IMR-90 (cell line): ENCODE measurements at regions of chr3 and their contacts with region 1.

Region 1: GRCh38 chr3:146577662-146578061 is 27.5 kb downstream of the PLSCR5 start:
- DNase-seq: peak; percentile 73
- ATAC-seq: peak; percentile 66; the same call in 1 of the 2 replicates
- H3K4me3 ChIP-seq: no peak overlapping the region
- H3K27ac ChIP-seq: no peak overlapping the region
- H3K4me1 ChIP-seq: peaks cover 2% of the 10 kb centered on the region; the same call in 1 of the 2 replicates
- H3K27me3 ChIP-seq: no peaks in the 10 kb centered on the region
- CTCF ChIP-seq: peak; percentile 70
- POLR2A ChIP-seq: no peak
- RAD21 ChIP-seq: peak; percentile 81

Region 2: DNA sequence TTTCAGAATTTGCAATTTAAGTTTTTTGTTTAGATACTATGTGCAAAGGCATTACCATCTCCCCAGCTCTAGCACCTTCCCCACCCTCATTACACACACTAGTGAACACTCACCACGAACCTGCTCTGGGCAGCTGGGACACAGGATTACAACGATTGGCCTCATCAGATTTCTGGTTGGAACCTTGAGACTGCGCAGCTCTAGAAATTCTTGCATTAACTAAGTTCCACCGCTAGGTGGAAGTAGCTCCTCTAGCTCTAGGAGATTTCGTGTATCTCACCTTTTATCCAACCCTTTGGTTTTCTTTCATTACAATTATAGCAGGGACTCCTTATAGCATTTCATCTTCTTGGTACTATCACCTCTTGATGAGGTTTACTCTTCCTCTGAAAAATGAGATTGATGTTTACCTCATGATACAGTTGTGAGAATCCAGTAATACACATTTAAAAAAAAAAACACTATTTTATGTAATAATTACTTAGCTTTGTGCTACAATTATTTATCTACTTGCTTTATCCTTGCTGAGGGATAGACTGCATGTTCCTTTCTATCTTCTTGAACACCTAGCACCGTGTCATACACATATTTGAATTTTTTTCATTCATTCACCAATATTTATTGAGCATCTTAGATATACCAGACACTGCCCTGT is 388.0 kb before region 1 on chr3:
- CTCF ChIA-PET with region 1: interaction called, 7 read pairs
- POLR2A ChIA-PET with region 1: no interaction called
- dilution Hi-C with region 1: no loop called
- in situ Hi-C with region 1: no loop called
- intact Hi-C with region 1: loop called (anchors 2 kb)
- DNase-seq: peak; percentile 64
- ATAC-seq: peak; percentile 95
- H3K4me3 ChIP-seq: no peak overlapping the region
- H3K27ac ChIP-seq: no peak overlapping the region
- H3K4me1 ChIP-seq: no peaks in the 10 kb centered on the region
- H3K27me3 ChIP-seq: no peaks in the 10 kb centered on the region
- CTCF ChIP-seq: peak; percentile 79
- POLR2A ChIP-seq: no peak
- RAD21 ChIP-seq: peak; percentile 83

Region 3: DNA sequence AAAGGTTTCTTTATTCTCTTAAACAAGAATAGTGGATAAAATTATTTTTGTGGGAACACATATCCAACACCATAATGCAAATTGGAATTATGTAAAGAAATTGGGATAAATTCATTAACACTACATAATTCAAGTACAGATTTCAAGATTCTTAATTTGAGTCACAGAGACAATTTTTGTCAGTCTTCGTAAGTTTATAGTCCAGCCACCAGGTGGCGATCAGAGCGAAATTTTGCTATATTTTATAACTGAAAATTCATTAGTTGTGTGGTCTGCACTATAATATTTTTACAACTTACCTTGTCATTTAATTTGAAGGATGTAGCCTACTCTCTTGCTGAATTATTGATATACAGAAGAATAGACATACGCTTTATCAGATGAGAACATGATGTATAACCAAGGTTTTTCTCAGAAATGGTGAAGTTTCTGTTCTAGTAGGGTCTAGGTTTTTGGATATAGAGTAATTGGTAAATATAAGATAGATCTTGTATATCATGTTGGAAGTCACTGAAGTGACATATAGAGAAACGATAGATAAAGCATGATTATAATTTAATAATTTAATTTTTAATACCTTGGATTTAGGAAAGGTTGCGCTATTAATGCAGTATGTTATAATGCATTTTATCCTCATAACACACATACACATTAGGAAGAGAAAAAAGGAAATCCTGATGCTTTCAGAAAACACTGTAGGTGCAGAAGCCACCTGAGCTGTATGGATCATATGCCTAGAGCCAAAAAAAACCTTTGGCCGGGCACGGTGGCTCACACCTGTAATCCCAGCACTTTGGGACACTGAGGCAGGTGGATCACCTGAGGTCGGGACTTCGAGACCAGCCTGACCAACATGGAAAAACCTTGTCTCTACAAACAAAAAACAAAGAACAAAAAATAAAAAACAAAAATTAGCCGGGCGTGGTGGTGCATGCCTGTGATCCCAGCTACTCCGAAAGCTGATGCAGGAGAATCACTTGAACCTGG is 358.5 kb before region 1 on chr3:
- CTCF ChIA-PET with region 1: interaction called, 3 read pairs
- POLR2A ChIA-PET with region 1: no interaction called
- dilution Hi-C with region 1: no loop called
- in situ Hi-C with region 1: loop called (anchors 10 kb)
- intact Hi-C with region 1: loop called (anchors 1 kb)
- DNase-seq: peak; percentile 44
- ATAC-seq: no peak; the same call in 1 of the 2 replicates
- H3K4me3 ChIP-seq: no peak overlapping the region
- H3K27ac ChIP-seq: no peak overlapping the region
- H3K4me1 ChIP-seq: peaks cover 5% of the 10 kb centered on the region
- H3K27me3 ChIP-seq: no peaks in the 10 kb centered on the region
- CTCF ChIP-seq: peak; percentile 68
- POLR2A ChIP-seq: no peak
- RAD21 ChIP-seq: peak; percentile 69

Region 4: DNA sequence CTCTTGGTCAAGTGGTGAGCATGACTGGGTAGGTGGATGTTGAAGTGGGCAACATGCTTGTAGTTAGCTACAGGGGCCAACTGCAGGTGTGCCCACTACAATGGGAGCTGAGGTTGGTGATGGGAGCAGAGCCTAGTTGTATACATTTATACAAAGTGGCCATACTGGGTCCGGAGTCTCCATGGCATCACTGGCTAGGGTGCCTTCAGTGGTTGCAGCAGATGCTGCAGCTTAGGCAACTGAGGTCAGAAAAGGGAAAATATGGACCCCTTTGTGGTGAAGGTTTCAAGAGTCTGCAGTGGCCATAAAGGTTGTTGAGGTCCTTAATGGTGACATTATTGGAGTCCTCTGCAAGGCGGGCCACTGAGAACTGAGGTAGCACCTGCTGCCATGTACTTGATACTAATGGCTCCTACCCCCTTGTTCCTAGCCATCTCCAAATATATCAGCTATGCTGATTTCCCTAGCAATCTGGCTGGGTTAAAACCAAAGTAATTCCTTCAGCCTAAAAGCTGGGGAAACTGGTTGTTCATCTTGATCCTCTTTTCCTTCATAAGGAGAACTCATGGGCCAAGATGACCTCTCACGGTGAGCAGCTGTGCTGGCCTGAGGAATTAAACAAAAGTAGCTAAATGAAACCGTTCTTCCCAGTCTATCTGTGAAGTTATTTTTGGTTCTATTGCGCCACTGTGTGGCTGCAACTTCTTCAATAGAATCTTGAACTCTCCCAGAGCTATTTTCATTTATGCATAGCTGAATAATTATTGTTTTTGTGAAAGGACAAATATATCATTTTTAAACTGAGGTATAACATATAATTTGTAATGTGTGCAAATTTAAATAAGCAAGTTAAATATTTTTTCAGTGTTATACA is 250.8 kb before region 1 on chr3:
- CTCF ChIA-PET with region 1: interaction called, 12 read pairs
- POLR2A ChIA-PET with region 1: no interaction called
- dilution Hi-C with region 1: no loop called
- in situ Hi-C with region 1: loop called (anchors 5 kb)
- intact Hi-C with region 1: loop called (anchors 2 kb)
- DNase-seq: peak; percentile 82
- ATAC-seq: peak; percentile 93
- H3K4me3 ChIP-seq: no peak overlapping the region
- H3K27ac ChIP-seq: no peak overlapping the region
- H3K4me1 ChIP-seq: no peaks in the 10 kb centered on the region
- H3K27me3 ChIP-seq: no peaks in the 10 kb centered on the region
- CTCF ChIP-seq: peak; percentile 82
- POLR2A ChIP-seq: no peak
- RAD21 ChIP-seq: peak; percentile 84

Region 5: DNA sequence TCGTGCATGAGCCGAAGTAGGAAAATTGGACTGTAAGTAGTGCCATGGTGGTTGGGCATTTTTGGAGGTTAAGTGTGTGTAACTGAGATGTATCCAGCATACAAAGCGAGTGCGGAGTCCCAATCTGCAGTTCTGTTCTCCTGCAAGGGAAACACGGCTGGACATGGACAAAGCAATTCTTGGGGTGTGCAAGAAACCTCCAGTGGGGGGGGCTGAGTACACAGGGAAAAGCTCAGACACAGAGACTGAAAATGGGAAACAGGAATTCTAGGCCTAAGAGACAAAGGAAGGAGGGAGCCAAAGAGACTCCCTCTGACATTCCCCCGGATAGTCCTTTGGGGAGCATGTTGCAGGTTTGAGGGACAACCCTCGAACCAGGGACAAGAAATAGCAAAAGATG is 243.5 kb before region 1 on chr3:
- CTCF ChIA-PET with region 1: no interaction called
- POLR2A ChIA-PET with region 1: no interaction called
- dilution Hi-C with region 1: no loop called
- in situ Hi-C with region 1: loop called (anchors 5 kb)
- intact Hi-C with region 1: loop called (anchors 1 kb)
- DNase-seq: peak; percentile 15
- ATAC-seq: no peak
- H3K4me3 ChIP-seq: no peak overlapping the region
- H3K27ac ChIP-seq: no peak overlapping the region
- H3K4me1 ChIP-seq: no peaks in the 10 kb centered on the region
- H3K27me3 ChIP-seq: no peaks in the 10 kb centered on the region
- CTCF ChIP-seq: peak; percentile 42
- POLR2A ChIP-seq: no peak
- RAD21 ChIP-seq: peak; percentile 57

Region 6: DNA sequence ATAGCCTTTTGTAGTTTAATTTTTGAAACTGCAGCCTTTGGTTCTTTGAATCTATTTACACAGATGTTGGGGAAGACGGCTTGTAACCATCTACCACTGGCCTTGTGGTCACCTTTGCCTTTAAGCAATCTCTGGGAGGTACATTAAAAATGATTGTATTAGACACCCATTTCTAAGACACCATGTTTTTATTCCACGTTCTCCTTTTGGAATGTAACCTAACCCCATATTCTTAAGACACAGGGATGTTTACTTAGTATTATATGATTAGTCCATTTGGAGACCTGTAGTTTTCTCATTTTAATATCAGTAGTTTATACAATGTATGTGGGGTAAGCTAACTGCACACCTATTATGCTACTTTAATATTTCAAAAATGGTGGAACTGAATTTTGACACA is 202.6 kb after region 1 on chr3:
- CTCF ChIA-PET with region 1: no interaction called
- POLR2A ChIA-PET with region 1: interaction called, 10 read pairs
- dilution Hi-C with region 1: no loop called
- in situ Hi-C with region 1: no loop called
- intact Hi-C with region 1: no loop called
- DNase-seq: peak; percentile 28
- ATAC-seq: no peak
- H3K4me3 ChIP-seq: no peak overlapping the region
- H3K27ac ChIP-seq: no peak overlapping the region
- H3K4me1 ChIP-seq: no peaks in the 10 kb centered on the region
- H3K27me3 ChIP-seq: no peaks in the 10 kb centered on the region
- CTCF ChIP-seq: no peak
- POLR2A ChIP-seq: no peak
- RAD21 ChIP-seq: no peak

Region 7: DNA sequence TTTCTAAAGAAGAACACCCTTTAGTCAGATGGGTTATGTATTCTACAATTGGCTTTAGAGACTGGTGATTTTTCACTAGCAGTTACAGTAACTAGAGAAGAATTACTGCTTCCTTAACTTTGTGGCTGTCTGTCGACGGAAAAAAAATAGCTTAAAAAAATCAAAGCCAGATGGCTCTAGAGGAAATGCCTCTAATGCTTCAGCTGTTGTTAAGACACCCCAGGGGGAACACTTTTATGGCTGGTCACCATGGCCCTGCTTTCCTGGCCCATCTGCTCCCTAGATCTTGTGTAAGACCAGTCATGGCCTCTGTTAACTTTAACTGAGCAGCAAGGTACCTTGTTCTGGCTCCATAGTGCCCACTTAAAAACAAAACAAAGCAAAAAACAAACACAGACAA is 226.1 kb after region 1 on chr3:
- CTCF ChIA-PET with region 1: no interaction called
- POLR2A ChIA-PET with region 1: no interaction called
- dilution Hi-C with region 1: no loop called
- in situ Hi-C with region 1: no loop called
- intact Hi-C with region 1: no loop called
- DNase-seq: peak; percentile 60
- ATAC-seq: peak; percentile 24; the same call in 1 of the 2 replicates
- H3K4me3 ChIP-seq: no peak overlapping the region
- H3K27ac ChIP-seq: no peak overlapping the region
- H3K4me1 ChIP-seq: no peaks in the 10 kb centered on the region
- H3K27me3 ChIP-seq: no peaks in the 10 kb centered on the region
- CTCF ChIP-seq: no peak
- POLR2A ChIP-seq: no peak
- RAD21 ChIP-seq: no peak